Sciatic nerve (tissue), 2 donors: ENCODE measurements at regions of chr12 and their contacts with region 1.

Region 1: DNA sequence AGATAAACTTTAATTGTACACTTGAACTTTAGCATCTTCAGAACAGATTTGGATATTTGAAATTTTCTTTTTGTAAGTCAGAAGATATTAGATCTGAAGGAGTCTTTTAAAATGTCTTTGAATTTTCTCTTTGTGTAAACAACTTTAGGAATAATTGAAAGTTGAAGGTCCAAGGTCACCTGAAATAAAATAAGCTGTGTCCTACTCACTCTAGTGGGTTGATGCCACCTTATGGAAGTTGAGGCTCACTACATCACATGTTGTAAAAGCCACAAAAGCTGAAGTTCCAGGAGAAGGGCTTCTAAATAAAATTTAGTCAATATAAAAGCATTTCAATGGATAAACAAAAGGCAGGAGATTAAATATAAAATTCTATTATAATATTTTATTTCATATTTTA is 122.0 kb upstream of the ATXN7L3B start:
- DNase-seq: no peak
- ATAC-seq: no peak

Region 2: GRCh38 chr12:76152161-76152807 is 1736.7 kb after region 1 on chr12:
- intact Hi-C with region 1: loop called (anchors 5 kb)
- DNase-seq: no peak
- ATAC-seq: no peak